ENCODE measurements at regions of chr1 and their contacts with region 1.

Region 1: DNA sequence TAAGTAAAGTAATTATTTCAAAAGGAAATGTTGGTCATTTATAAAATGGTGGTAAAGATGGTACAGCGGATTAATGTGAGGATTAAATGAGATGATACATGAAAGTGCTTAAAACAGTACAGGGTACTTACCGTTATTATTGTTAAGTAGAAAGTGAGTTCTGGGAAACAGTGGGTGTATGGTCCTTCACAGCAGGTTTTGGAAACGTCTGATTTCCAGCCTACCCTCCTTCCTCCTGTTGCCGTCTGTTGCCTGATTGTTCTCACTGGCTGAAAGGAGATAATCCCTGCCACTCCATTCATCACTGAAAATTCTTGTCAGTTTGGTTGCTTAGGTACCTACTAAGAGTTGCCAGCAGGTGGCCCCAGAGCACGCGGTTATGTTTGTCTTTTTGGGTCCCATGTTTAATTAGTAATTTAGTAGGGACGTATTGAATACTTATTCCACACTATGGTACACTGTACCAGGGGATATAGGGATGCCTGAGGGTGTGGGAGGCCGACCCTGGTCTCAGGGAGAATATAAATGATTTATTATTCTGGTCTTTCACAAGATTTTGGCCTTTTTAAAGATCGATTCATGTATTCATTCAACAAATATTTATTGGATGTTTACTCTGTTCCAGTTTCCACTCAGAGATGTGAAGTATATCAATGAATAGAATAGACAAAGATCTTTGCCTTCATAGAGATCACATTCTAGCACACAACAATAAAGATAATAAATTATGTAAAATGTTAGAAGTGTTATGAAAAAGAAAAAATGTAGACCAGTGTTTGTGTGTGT is 30.8 kb upstream of the RPTN start:
- DNase-seq: peak; percentile 29 to 87 (median 71)
- H3K4me3 ChIP-seq: peak overlapping the region in 2 of 4 donors; percentile 36 to 47
- H3K27ac ChIP-seq: peak overlapping the region in 1 of 5 donors; percentile 60
- H3K4me1 ChIP-seq: peaks cover 0 to 6% of the 10 kb centered on the region in 2 donors
- H3K27me3 ChIP-seq: no peaks in the 10 kb centered on the region
- CTCF ChIP-seq: peak; percentile 49 to 82 (median 77)
- POLR2A ChIP-seq: no peak

Region 2: DNA sequence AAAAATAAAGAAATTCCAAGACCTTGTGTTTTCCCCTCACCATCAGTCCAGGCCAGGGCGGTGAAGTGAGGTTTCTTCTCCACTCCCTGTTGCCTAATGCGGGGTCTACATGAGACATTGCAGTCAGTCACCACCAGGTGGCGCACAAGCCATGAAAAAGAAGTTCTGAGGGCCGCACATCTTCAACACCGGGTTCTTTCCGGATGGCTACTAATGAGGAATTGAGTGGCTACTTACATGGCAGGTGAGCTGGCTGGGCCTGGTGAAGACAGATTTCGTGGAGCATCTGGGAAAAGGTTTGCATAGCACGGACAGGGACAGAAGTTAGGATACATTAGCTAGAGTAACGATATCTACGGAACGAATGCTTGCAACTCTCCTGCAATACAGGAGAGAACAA is 137.2 kb before region 1 on chr1:
- intact Hi-C with region 1: loop called in 1 of 2 experiments (anchors 2 kb)
- DNase-seq: peak; percentile 78 to 95 (median 86)
- H3K4me3 ChIP-seq: no peak overlapping the region
- H3K27ac ChIP-seq: no peak overlapping the region
- H3K4me1 ChIP-seq: peaks cover 10 to 13% of the 10 kb centered on the region in 2 donors
- H3K27me3 ChIP-seq: peaks cover 15% of the 10 kb centered on the region
- CTCF ChIP-seq: peak; percentile 78 to 94 (median 90)
- POLR2A ChIP-seq: no peak

Region 3: GRCh38 chr1:152096121-152096865 is 93.6 kb before region 1 on chr1:
- intact Hi-C with region 1: no loop called
- DNase-seq: no peak
- H3K4me3 ChIP-seq: no peak overlapping the region
- H3K27ac ChIP-seq: no peak overlapping the region
- H3K4me1 ChIP-seq: no peaks in the 10 kb centered on the region
- H3K27me3 ChIP-seq: no peaks in the 10 kb centered on the region
- CTCF ChIP-seq: no peak
- POLR2A ChIP-seq: no peak

Region 4: GRCh38 chr1:152141974-152142584 is 47.8 kb before region 1 on chr1:
- intact Hi-C with region 1: loop called (anchors 2 to 5 kb)
- DNase-seq: peak; percentile 31 to 85 (median 64)
- H3K4me3 ChIP-seq: no peak overlapping the region
- H3K27ac ChIP-seq: no peak overlapping the region
- H3K4me1 ChIP-seq: no peaks in the 10 kb centered on the region
- H3K27me3 ChIP-seq: no peaks in the 10 kb centered on the region
- CTCF ChIP-seq: peak; percentile 73 to 90 (median 84)
- POLR2A ChIP-seq: no peak

Region 5: GRCh38 chr1:152347116-152347728 is 157.4 kb after region 1 on chr1:
- intact Hi-C with region 1: loop called in 1 of 2 experiments (anchors 10 kb)
- DNase-seq: peak in 6 of 7 donors; percentile 27 to 72 (median 54)
- H3K4me3 ChIP-seq: no peak overlapping the region
- H3K27ac ChIP-seq: no peak overlapping the region
- H3K4me1 ChIP-seq: no peaks in the 10 kb centered on the region
- H3K27me3 ChIP-seq: no peaks in the 10 kb centered on the region
- CTCF ChIP-seq: peak; percentile 67 to 92 (median 77)
- POLR2A ChIP-seq: no peak

Region 6: GRCh38 chr1:152440635-152441471 is 251.0 kb after region 1 on chr1:
- intact Hi-C with region 1: loop called (anchors 5 to 10 kb)
- DNase-seq: peak; percentile 59 to 84 (median 78)
- H3K4me3 ChIP-seq: no peak overlapping the region
- H3K27ac ChIP-seq: no peak overlapping the region
- H3K4me1 ChIP-seq: no peaks in the 10 kb centered on the region
- H3K27me3 ChIP-seq: peaks cover 5% of the 10 kb centered on the region
- CTCF ChIP-seq: peak; percentile 62 to 78 (median 74)
- POLR2A ChIP-seq: no peak

Region 7: DNA sequence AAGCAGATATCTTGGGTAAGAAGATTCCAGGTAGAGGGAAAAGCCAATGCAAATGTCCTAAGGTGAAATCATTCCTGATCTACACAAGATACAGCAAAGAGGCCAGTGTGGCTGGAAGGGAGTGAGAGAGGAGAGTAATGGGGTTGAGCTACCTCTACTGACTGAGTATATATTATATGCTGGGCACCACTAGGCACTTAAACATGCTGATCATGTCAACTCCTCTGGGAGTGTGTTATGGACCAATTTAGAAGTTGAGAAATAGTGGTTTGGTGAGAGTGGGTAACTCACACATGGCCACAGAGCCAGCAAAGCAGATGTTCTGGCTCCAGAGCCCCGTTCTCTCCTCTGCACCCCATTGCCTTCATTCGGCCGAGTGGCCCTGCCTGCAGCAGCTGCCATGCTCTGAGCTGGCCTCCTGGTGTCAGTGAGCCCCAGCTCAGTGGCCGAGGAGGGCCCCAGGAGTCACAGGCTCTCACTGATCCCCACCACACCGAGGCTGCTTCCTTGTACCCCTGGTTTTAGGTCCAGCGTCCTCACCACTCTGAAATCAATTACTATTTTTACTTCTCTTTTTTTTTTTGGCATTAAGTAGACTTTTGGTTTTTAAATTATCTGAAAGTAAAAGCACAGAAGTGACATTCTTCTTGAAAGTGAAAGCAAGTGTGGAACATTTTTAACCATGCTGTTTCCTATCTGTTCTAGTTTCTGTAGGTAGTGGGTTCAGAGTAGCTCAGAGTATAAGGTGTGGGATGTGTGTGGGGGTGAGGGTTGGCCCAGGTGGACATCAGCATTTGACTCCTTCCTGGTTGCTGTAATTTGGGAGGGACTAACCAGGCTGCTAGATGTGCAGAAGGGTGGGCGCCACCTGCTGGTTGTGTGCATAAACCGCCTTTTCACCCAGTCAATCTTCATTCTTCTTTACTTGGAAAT is 270.0 kb after region 1 on chr1:
- intact Hi-C with region 1: loop called in 1 of 2 experiments (anchors 5 kb)
- DNase-seq: peak; percentile 41 to 79 (median 73)
- H3K4me3 ChIP-seq: no peak overlapping the region
- H3K27ac ChIP-seq: no peak overlapping the region
- H3K4me1 ChIP-seq: peaks cover 0 to 6% of the 10 kb centered on the region in 2 donors
- H3K27me3 ChIP-seq: no peaks in the 10 kb centered on the region
- CTCF ChIP-seq: peak; percentile 41 to 74 (median 58)
- POLR2A ChIP-seq: no peak

Measured in adrenal gland (tissue), 19 donors.